ENCODE measurements at regions of chr9 and their contacts with region 1.

Region 1: DNA sequence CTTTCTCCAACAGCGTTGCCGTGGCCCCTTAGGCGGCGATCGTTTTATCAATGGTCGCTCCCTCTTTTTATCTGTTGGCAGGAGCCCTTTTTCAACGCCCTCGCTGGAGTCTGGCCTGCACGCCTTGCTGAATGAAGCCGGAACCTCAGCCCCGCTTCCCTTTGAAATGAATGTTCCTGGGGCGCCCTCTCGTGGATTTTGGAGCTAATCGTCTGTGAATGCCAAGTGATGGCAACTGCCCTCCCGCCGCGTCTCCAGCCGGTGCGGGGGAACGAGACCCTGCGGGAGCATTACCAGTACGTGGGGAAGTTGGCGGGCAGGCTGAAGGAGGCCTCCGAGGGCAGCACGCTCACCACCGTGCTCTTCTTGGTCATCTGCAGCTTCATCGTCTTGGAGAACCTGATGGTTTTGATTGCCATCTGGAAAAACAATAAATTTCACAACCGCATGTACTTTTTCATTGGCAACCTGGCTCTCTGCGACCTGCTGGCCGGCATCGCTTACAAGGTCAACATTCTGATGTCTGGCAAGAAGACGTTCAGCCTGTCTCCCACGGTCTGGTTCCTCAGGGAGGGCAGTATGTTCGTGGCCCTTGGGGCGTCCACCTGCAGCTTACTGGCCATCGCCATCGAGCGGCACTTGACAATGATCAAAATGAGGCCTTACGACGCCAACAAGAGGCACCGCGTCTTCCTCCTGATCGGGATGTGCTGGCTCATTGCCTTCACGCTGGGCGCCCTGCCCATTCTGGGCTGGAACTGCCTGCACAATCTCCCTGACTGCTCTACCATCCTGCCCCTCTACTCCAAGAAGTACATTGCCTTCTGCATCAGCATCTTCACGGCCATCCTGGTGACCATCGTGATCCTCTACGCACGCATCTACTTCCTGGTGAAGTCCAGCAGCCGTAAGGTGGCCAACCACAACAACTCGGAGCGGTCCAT is 10.0 kb downstream of the S1PR3 start:
- DNase-seq: peak; percentile 92
- ATAC-seq: peak; percentile 66

Region 2: DNA sequence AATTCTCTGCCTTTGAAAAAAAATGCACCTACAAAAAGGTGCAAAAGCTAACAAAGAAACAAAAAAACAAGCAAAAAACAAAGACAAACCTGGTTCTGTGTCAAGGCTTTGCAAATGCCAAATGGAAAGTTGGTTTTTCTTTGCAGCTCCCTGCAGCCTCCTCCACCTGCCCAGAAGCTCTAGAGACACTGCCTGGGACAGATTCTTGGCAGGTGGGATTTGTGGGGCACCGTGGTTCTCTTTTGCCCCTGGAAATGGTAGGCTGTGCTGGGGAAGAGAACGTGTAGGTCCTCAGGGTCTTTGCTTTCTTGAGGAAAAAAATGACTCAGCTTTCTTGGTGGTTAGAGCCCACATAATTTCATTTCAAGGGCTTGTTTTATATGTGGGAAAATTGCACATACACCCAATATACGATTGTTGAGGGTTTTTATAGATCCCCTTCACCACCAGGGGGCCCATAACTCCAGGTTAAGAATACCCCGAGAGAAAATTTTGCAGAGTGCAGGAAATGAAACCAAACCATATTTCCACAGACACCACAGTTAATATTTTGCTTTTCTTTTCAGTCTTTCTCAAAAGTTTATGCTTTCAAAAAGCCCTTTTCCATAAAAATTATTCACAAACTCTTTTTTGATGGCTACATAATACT is 407.6 kb before region 1 on chr9:
- intact Hi-C with region 1: loop called (anchors 1 kb)
- DNase-seq: no peak
- ATAC-seq: no peak

Region 3: GRCh38 chr9:88658311-88658822 is 342.9 kb before region 1 on chr9:
- intact Hi-C with region 1: loop called (anchors 5 kb)
- DNase-seq: no peak
- ATAC-seq: peak; percentile 84

Region 4: GRCh38 chr9:88722753-88723152 is 278.5 kb before region 1 on chr9:
- intact Hi-C with region 1: loop called (anchors 2 kb)
- DNase-seq: no peak
- ATAC-seq: no peak

Region 5: DNA sequence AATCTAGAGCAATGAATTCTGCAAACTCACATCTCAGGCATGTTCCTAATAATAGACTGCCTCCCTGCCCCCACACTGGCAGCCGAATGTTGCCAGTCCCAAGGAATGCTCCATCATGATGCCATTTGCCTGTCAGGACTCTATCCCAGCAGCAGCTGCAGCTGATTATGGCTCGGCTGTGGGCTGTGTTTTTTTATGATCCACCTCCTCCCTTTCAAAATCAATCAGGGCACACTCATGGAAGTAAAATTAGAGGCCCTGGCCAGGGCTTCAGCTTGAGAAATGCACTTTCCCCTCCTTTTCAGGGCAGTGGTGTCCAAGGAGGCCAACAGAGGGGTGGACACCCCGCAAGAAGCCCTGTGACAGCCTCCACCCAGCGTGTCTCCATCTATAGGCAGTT is 186.7 kb before region 1 on chr9:
- intact Hi-C with region 1: loop called (anchors 2 kb)
- DNase-seq: no peak
- ATAC-seq: peak; percentile 84

Region 6: GRCh38 chr9:88949425-88949824 is 51.8 kb before region 1 on chr9:
- intact Hi-C with region 1: loop called (anchors 2 kb)
- DNase-seq: no peak
- ATAC-seq: peak; percentile 87

Region 7: GRCh38 chr9:89052470-89053097 is 51.3 kb after region 1 on chr9:
- intact Hi-C with region 1: no loop called
- DNase-seq: no peak
- ATAC-seq: peak; percentile 90

Region 8: GRCh38 chr9:89109666-89110065 is 108.4 kb after region 1 on chr9:
- intact Hi-C with region 1: no loop called
- DNase-seq: no peak
- ATAC-seq: no peak

Region 9: DNA sequence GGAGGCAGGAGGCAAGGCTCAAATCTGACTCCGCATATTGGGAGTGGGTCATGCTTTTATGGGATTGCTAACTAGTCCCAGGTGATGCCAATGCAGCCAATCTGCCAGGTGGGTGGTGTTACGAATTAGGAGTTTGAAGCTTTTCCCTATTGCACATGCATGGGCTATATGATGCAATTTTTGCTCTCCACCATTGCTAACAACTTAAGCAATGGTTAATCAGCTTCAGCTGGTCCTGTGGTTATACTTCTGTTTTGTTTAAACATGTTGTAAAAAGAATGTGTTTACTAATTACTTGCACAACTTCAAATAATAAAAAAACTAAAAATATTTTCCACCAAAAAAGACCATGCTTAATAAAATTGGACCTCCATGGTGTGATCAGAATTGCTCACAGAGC is 121.7 kb after region 1 on chr9:
- intact Hi-C with region 1: no loop called
- DNase-seq: no peak
- ATAC-seq: no peak